HEK293T (cell line): ENCODE measurements at regions of chr7 and their contacts with region 1.

Region 1: GRCh38 chr7:94395141-94396036 is 694 bp downstream of the COL1A2 start:
- DNase-seq: peak; percentile 70

Region 2: GRCh38 chr7:94289071-94289470 is 106.3 kb before region 1 on chr7:
- CTCF ChIA-PET with region 1: interaction called, 16 read pairs
- POLR2A ChIA-PET with region 1: no interaction called
- DNase-seq: peak; percentile 64

Region 3: GRCh38 chr7:94295850-94296249 is 99.5 kb before region 1 on chr7:
- CTCF ChIA-PET with region 1: interaction called, 11 read pairs
- POLR2A ChIA-PET with region 1: no interaction called
- DNase-seq: no peak

Region 4: DNA sequence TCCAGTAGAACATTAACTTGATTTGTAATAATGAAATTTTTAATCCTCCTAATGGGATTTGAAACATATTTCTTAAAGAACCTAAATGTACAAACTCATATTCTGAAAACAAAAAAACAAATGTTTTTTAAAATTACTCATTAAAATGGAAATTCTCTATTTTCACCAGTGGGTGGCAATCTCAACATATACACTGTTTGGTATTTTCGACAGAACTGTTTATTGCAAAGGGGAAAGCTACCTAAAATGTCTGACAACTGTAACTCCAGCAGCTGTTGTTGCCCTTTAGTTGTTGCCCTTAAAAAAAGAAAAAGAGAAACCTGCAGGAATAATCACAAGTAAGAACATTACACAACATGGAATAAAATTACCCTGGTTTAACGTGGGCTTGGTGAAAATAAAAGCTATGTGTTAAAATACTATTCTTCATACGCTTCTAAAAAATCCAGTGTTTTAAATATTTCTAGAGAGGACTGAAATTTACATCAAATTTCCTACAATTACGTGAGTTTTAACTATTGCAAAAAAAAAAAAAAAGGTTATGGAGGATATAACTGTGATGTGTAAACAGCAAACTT is 53.8 kb after region 1 on chr7:
- CTCF ChIA-PET with region 1: no interaction called
- POLR2A ChIA-PET with region 1: no interaction called
- DNase-seq: peak; percentile 30